ENCODE measurements at regions of chr2 and their contacts with region 1.

Region 1: DNA sequence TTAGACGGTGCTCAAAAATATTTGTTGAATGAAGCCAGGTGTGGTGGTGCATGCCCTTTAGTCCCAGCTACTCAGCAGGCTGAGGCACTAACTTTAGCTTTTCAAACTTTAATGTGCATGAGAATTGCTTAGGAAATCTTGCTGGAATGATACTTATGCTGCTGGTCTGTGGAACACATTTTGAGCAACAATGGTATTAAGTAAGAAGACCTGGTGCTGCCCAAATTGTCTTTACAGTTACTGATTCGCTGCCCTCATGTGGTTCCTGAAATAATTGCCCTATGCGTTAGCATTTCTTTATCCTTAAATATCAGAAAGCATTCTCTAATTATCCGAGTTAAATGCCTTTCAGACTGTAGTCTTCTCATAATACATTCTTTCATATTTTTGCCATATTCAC is 76.0 kb upstream of the SESTD1 start:
- DNase-seq: no peak
- H3K4me3 ChIP-seq: peak overlapping the region in 9 of 59 donors; percentile 1 to 34 (median 27)
- H3K27ac ChIP-seq: no peak overlapping the region
- H3K27me3 ChIP-seq: no peaks in the 10 kb centered on the region
- CTCF ChIP-seq: peak in 48 of 56 donors; percentile 14 to 65 (median 42)

Region 2: GRCh38 chr2:179218848-179219594 is 121.6 kb before region 1 on chr2:
- intact Hi-C with region 1: loop called (anchors 2 to 10 kb)
- DNase-seq: peak; percentile 38 to 85 (median 68)
- H3K4me3 ChIP-seq: no peak overlapping the region
- H3K27ac ChIP-seq: peak overlapping the region in 42 of 59 donors; percentile 1 to 76 (median 35)
- H3K27me3 ChIP-seq: no peaks in the 10 kb centered on the region
- CTCF ChIP-seq: peak; percentile 57 to 97 (median 90)

Region 3: DNA sequence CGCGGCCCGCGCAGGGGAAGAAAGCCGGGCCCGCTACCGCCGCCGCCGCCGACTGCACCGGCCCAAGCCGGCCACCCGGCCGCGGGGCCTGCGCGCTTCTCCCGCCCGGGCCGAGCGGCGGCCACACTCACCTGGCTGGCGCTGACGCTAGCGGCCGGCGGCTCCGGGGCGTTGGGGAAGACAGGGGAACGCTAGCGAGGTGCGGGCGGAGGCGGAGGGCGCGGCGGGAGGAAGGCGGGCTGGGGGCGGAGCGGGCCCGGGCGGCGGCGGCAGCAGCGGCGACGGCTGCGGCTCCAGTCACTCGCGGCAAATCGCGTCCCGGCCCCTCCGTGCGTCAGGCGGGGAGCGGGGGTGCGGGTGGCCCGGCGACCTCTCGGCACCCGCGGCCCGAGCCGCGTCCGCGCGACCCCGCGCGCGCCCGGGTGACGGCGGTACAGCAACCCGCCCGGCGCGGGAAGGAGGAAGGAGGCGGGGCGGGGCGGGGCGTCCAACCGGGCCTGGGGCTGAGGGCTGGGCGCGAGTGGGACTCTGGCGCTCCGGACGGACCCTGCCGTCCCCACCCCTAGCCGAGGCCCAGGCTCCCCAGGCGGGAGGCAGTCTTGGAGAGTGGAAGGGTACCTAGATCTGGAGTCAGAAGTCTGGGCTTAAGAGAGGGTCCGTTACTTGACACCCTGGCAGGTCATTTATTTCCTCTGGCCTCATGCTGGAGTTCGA is 76.1 kb before region 1 on chr2 and contains the start of gene SESTD1:
- intact Hi-C with region 1: loop called in 1 of 2 experiments (anchors 5 kb)
- DNase-seq: peak in 9 of 10 donors; percentile 28 to 83 (median 64)
- H3K4me3 ChIP-seq: peak within 1 kb of the TSS; percentile 59 to 93 (median 79)
- H3K27ac ChIP-seq: peak within 1 kb of the TSS; percentile 57 to 95 (median 87)
- H3K27me3 ChIP-seq: no peaks in the 10 kb centered on the region
- CTCF ChIP-seq: peak in 7 of 56 donors; percentile 2 to 25 (median 8)
- total RNA-seq, gene SESTD1: 76.4 to 194 (median 123) TPM

Region 4: DNA sequence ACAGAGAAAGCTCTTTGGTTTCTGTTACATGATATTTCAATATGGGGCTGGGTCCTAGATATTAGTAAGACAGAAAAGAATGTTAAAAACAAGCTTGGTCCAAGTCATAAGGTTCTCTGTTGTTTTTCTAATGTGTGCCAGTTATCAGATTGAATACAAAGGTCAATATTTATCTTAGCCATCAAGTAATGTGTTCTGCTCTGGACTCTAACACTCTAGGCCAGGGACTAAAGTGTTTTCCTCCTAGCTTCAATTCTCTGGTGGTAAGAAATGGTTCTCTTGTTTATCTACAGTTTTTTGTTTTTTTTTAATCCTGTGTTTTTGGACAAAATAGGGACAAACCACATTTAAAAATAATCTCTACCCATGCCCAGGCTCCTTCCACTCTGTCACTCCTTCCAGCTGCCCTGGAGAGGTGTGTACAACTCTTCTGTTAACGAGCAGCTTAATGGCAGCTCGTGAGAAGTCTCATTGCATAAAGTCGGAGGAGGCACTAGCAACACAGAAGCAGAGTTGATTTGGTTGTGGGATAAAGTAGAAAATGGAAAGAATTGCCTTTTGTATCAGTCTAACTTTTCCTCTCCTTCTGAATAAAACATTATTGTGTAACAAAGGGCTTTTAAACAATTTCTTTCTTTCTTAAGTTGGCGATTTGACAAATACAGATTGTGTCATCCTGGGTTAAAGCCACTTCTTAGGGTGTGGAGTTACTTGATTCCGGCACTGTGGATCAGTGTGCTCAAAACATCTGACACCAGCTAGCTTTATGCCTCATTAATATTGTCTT is 68.1 kb before region 1 on chr2:
- intact Hi-C with region 1: loop called (anchors 5 to 10 kb)
- DNase-seq: no peak
- H3K4me3 ChIP-seq: peak overlapping the region in 39 of 59 donors; percentile 0 to 47 (median 20)
- H3K27ac ChIP-seq: peak overlapping the region; percentile 34 to 98 (median 91)
- H3K27me3 ChIP-seq: no peaks in the 10 kb centered on the region
- CTCF ChIP-seq: peak in 4 of 56 donors; percentile 4 to 18 (median 12)